ENCODE measurements at regions of chr2 and their contacts with region 1.

Region 1: GRCh38 chr2:188291617-188292347 is at the start of gene GULP1:
- DNase-seq: no peak
- ATAC-seq: peak; percentile 52
- H3K4me3 ChIP-seq: peak within 1 kb of the TSS; percentile 80 to 90
- H3K27ac ChIP-seq: peak within 1 kb of the TSS; percentile 98
- H3K4me1 ChIP-seq: peaks cover 24 to 46% of the 10 kb centered on the region in 2 experiments
- H3K27me3 ChIP-seq: no peaks in the 10 kb centered on the region
- CTCF ChIP-seq: peak; percentile 31 to 72 (median 60); a peak in 5 of 6 replicates
- POLR2A ChIP-seq: no peak
- RAD21 ChIP-seq: peak; percentile 51
- total RNA-seq, gene GULP1: 76.0 TPM

Region 2: GRCh38 chr2:187541086-187542085 is 750.4 kb before region 1 on chr2:
- CTCF ChIA-PET with region 1: no interaction called
- POLR2A ChIA-PET with region 1: interaction called, 4 read pairs
- RAD21 ChIA-PET with region 1: no interaction called
- intact Hi-C with region 1: loop called (anchors 5 kb)
- DNase-seq: peak; percentile 74
- ATAC-seq: peak; percentile 57
- H3K4me3 ChIP-seq: peak overlapping the region; percentile 17 to 36
- H3K27ac ChIP-seq: peak overlapping the region; percentile 93
- H3K4me1 ChIP-seq: peaks cover 50 to 72% of the 10 kb centered on the region in 2 experiments
- H3K27me3 ChIP-seq: no peaks in the 10 kb centered on the region
- CTCF ChIP-seq: no peak
- POLR2A ChIP-seq: no peak
- RAD21 ChIP-seq: peak; percentile 12; the same call in 1 of the 2 replicates

Region 3: GRCh38 chr2:188181067-188181838 is 110.5 kb before region 1 on chr2:
- CTCF ChIA-PET with region 1: no interaction called
- POLR2A ChIA-PET with region 1: no interaction called
- RAD21 ChIA-PET with region 1: no interaction called
- intact Hi-C with region 1: no loop called
- DNase-seq: no peak
- ATAC-seq: no peak
- H3K4me3 ChIP-seq: no peak overlapping the region
- H3K27ac ChIP-seq: no peak overlapping the region
- H3K4me1 ChIP-seq: no peaks in the 10 kb centered on the region
- H3K27me3 ChIP-seq: no peaks in the 10 kb centered on the region
- CTCF ChIP-seq: no peak
- POLR2A ChIP-seq: no peak
- RAD21 ChIP-seq: no peak

Region 4: GRCh38 chr2:188303363-188304031 is 11.7 kb after region 1 on chr2:
- CTCF ChIA-PET with region 1: no interaction called
- POLR2A ChIA-PET with region 1: interaction called, 14 read pairs
- RAD21 ChIA-PET with region 1: no interaction called
- intact Hi-C with region 1: no loop called
- DNase-seq: no peak
- ATAC-seq: peak; percentile 49
- H3K4me3 ChIP-seq: peak overlapping the region in 1 of 2 experiments; percentile 12; a peak in 1 of 4 replicates
- H3K27ac ChIP-seq: peak overlapping the region; percentile 24; the same call in 1 of the 2 replicates
- H3K4me1 ChIP-seq: peaks cover 16 to 63% of the 10 kb centered on the region in 2 experiments
- H3K27me3 ChIP-seq: no peaks in the 10 kb centered on the region
- CTCF ChIP-seq: no peak
- POLR2A ChIP-seq: no peak
- RAD21 ChIP-seq: no peak

Region 5: GRCh38 chr2:188381614-188382013 is 89.8 kb after region 1 on chr2:
- CTCF ChIA-PET with region 1: interaction called, 6 read pairs
- POLR2A ChIA-PET with region 1: interaction called, 13 read pairs
- RAD21 ChIA-PET with region 1: no interaction called
- intact Hi-C with region 1: loop called (anchors 2 kb)
- DNase-seq: peak; percentile 83
- ATAC-seq: peak; percentile 56
- H3K4me3 ChIP-seq: peak overlapping the region; percentile 14 to 41; a peak in 2 of 4 replicates
- H3K27ac ChIP-seq: peak overlapping the region; percentile 79; the same call in 1 of the 2 replicates
- H3K4me1 ChIP-seq: peaks cover 47 to 57% of the 10 kb centered on the region in 2 experiments
- H3K27me3 ChIP-seq: no peaks in the 10 kb centered on the region
- CTCF ChIP-seq: no peak
- POLR2A ChIP-seq: no peak
- RAD21 ChIP-seq: peak; percentile 44

Region 6: DNA sequence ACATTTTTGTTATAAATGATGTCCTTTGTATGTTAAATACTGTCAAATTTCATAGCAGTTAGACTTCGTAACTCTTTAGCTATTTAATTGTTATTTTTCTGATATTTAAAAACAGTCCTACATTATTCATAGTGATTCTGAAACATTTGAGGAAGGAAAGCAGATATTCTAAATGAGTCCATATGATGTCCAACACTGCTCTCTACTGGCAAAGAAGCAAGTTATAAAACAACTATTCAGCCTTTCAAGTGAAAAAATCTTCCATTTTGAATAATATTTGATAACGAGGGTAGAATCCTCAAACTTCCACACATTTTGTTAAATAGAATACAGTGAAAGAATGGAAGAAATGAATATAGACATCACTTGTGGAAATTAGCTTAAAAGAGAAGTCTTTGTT is 220.7 kb after region 1 on chr2:
- CTCF ChIA-PET with region 1: interaction called, 3 read pairs
- POLR2A ChIA-PET with region 1: interaction called, 7 read pairs
- RAD21 ChIA-PET with region 1: interaction called in 1 of 2 experiments, 3 read pairs
- intact Hi-C with region 1: loop called (anchors 5 kb)
- DNase-seq: no peak
- ATAC-seq: peak; percentile 60
- H3K4me3 ChIP-seq: no peak overlapping the region
- H3K27ac ChIP-seq: no peak overlapping the region
- H3K4me1 ChIP-seq: peaks cover 0 to 7% of the 10 kb centered on the region in 2 experiments; a peak in 1 of 4 replicates
- H3K27me3 ChIP-seq: no peaks in the 10 kb centered on the region
- CTCF ChIP-seq: peak; percentile 42 to 71 (median 61); a peak in 5 of 6 replicates
- POLR2A ChIP-seq: no peak
- RAD21 ChIP-seq: peak; percentile 89